ENCODE measurements at regions of chr1 and their contacts with region 1.

Region 1: DNA sequence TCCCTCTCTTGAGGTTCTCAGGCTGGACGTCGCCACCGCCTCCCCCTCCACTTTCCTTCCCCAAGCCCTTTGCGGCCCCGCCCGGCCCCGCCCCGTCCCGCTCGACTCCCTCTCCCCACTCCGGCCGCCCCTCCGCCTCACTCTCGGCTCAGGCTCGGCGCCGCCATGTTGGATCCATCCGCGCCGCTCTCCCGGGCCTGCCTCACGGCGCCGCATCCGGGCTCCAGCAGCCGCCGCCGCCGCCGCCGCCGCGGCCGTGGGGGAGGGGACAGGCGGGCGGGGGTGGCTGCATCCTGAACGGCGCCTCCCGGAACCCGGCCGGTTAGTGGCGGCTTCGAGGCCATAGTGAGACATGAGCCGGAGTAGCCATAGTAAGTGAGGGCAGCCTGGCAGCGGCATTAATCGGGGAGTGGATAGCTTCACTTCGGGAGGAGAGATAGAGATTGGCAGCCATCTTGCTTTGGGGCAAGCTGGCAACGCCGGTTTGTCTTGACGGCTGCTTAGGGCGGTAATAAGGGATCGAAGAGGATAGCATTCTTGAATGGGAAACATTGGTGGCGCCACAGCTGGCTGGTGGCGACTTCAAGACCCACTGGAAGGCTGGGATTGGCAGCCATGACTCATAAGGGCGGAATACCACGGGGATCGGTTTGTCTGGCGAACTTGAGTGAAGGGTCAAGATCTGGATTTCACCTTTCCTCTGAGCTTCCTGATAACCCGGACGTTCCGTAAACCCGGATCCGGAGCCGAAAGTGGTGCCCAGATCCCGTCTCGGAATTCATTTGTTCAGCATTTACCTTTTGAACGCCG is at the start of gene DEDD:
- DNase-seq: peak; percentile 78 to 94 (median 87)
- ATAC-seq: peak; percentile 94 to 96 (median 95)
- H3K4me3 ChIP-seq: peak within 1 kb of the TSS; percentile 94 to 97
- H3K4me3 Mint-ChIP-seq: no peak within 1 kb of the TSS
- H3K27ac ChIP-seq: peak within 1 kb of the TSS; percentile 89
- H3K27ac Mint-ChIP-seq: peak within 1 kb of the TSS; percentile 90 to 94
- H3K4me1 ChIP-seq: peaks cover 34 to 38% of the 10 kb centered on the region in 2 experiments
- H3K4me1 Mint-ChIP-seq: peaks cover 45 to 50% (median 47%) of the 10 kb centered on the region in 3 donors
- H3K27me3 ChIP-seq: no peaks in the 10 kb centered on the region
- H3K27me3 Mint-ChIP-seq: no peaks in the 10 kb centered on the region
- total RNA-seq, gene DEDD: 34.3 to 43.6 (median 40.6) TPM

Region 2: GRCh38 chr1:161117759-161118581 is 14.6 kb before region 1 on chr1 and contains the starts of genes NIT1 and PFDN2:
- CTCF ChIA-PET with region 1: interaction called, 3 to 6 read pairs
- POLR2A ChIA-PET with region 1: interaction called in 1 of 2 experiments, 11 read pairs
- DNase-seq: peak; percentile 64 to 92 (median 79)
- ATAC-seq: peak; percentile 86 to 89 (median 88)
- H3K4me3 ChIP-seq: peak within 1 kb of the TSS; percentile 90 to 100
- H3K4me3 Mint-ChIP-seq: peak within 1 kb of the TSS; percentile 89 to 96 (median 92)
- H3K27ac ChIP-seq: peak within 1 kb of the TSS; percentile 89
- H3K27ac Mint-ChIP-seq: peak within 1 kb of the TSS; percentile 91 to 93
- H3K4me1 ChIP-seq: peaks cover 22 to 42% of the 10 kb centered on the region in 2 experiments
- H3K4me1 Mint-ChIP-seq: peaks cover 61 to 76% (median 76%) of the 10 kb centered on the region in 3 donors
- H3K27me3 ChIP-seq: no peaks in the 10 kb centered on the region
- H3K27me3 Mint-ChIP-seq: no peaks in the 10 kb centered on the region
- total RNA-seq, gene NIT1: 23.4 to 44.7 (median 41.7) TPM
- total RNA-seq, gene PFDN2: 32.4 to 48.3 (median 42.1) TPM

Region 3: DNA sequence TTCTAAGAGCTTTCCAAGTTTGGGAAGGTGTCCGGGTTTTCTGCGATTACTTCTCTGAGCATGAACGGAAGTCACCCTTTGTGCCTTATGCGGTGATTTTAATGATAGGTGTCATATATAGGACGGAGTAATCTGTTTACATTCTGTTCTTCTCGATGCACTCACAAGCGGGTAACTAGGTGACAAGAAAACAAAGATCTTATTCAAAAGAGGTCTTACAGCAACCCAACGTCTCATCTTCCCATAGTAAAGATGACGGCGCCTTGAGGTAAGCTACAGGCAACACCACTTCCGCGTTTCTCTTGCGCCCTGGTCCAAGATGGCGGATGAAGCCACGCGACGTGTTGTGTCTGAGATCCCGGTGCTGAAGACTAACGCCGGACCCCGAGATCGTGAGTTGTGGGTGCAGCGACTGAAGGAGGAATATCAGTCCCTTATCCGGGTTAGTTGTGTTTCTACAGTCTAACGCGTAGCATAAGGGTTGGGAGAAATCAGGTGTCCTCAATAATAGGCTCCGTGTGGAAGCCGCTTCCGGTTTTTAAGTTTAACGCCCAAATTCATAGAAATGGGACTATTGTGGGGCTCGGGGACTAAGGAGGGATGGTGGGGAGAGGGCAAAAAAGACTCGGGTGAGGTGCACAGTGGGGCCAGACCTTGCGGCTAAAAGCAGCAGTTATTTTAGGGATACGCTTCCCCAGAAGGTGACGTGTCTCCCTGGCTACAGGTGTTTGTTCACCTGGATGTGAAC is 21.2 kb after region 1 on chr1 and contains the start of gene UFC1:
- CTCF ChIA-PET with region 1: interaction called in 1 of 2 experiments, 6 read pairs
- POLR2A ChIA-PET with region 1: interaction called, 3 to 18 read pairs
- DNase-seq: peak; percentile 72 to 94 (median 82)
- ATAC-seq: peak; percentile 93 to 97 (median 96)
- H3K4me3 ChIP-seq: peak within 1 kb of the TSS; percentile 88 to 93
- H3K4me3 Mint-ChIP-seq: peak within 1 kb of the TSS; percentile 94 to 98 (median 97)
- H3K27ac ChIP-seq: peak within 1 kb of the TSS; percentile 97
- H3K27ac Mint-ChIP-seq: peak within 1 kb of the TSS; percentile 99 to 100
- H3K4me1 ChIP-seq: peaks cover 12 to 19% of the 10 kb centered on the region in 2 experiments
- H3K4me1 Mint-ChIP-seq: peaks cover 28 to 35% (median 33%) of the 10 kb centered on the region in 3 donors
- H3K27me3 ChIP-seq: peaks cover 0 to 2% of the 10 kb centered on the region in 2 experiments
- H3K27me3 Mint-ChIP-seq: no peaks in the 10 kb centered on the region
- total RNA-seq, gene UFC1: 82.9 to 109 (median 93.8) TPM